ENCODE measurements at regions of chr17 and their contacts with region 1.

Region 1: DNA sequence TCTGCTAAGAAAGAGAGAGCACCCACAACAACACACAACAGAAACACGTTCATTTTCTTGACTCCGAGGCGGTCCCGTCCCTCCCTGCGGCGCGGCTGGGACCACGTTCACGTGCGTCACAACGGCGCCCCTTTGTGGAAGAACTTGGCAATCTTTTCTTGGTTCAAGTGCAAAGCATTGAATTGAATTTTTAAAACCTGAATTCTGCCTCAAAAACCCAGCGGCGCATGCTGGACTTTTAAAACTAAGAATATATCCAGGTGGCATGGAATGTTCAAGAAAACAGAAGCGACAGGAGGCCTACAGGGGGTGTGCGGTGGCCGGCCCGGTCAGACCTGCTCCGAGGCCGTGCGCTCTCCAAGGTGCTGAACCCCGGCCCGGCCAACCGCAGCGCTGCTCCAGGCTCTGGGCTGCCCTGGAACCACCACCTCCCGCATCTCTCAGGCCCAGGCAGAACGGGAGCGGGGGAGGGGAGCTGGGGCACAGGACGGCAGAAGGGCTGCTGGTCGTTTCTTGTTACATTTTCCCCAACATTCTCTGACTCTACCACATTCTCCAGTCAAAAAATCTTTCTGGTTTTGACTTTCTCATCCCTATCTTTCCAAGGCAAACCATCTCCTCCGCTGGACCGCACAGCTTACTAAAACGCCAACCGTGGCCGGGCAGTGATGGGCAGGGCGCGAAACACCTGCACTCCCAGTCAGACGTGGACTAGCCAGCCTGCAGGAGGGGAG is 3.4 kb upstream of the HEXD start:
- DNase-seq: no peak
- H3K4me3 ChIP-seq: no peak overlapping the region
- H3K27ac ChIP-seq: no peak overlapping the region
- H3K4me1 ChIP-seq: peaks cover 16 to 35% (median 16%) of the 10 kb centered on the region in 3 donors
- H3K27me3 ChIP-seq: no peaks in the 10 kb centered on the region
- CTCF ChIP-seq: peak in 5 of 6 experiments; percentile 48 to 69 (median 63)
- POLR2A ChIP-seq: no peak

Region 2: GRCh38 chr17:82351716-82352488 is 62.8 kb before region 1 on chr17:
- intact Hi-C with region 1: loop called (anchors 2 kb)
- DNase-seq: no peak
- H3K4me3 ChIP-seq: no peak overlapping the region
- H3K27ac ChIP-seq: no peak overlapping the region
- H3K4me1 ChIP-seq: peaks cover 0 to 25% (median 3%) of the 10 kb centered on the region in 3 donors
- H3K27me3 ChIP-seq: peaks cover 0 to 77% (median 0%) of the 10 kb centered on the region in 4 donors
- CTCF ChIP-seq: peak; percentile 91 to 99 (median 96)
- POLR2A ChIP-seq: no peak

Region 3: GRCh38 chr17:82475458-82475857 is 60.7 kb after region 1 on chr17:
- intact Hi-C with region 1: no loop called
- DNase-seq: no peak
- H3K4me3 ChIP-seq: no peak overlapping the region
- H3K27ac ChIP-seq: no peak overlapping the region
- H3K4me1 ChIP-seq: peaks cover 0 to 3% (median 0%) of the 10 kb centered on the region in 3 donors
- H3K27me3 ChIP-seq: no peaks in the 10 kb centered on the region
- CTCF ChIP-seq: no peak
- POLR2A ChIP-seq: no peak